Left cardiac atrium (tissue), 4 donors: ENCODE measurements at regions of chr20 and their contacts with region 1.

Region 1: GRCh38 chr20:17179840-17180239 is 47.0 kb upstream of the PCSK2 start:
- DNase-seq: no peak
- ATAC-seq: no peak

Region 2: DNA sequence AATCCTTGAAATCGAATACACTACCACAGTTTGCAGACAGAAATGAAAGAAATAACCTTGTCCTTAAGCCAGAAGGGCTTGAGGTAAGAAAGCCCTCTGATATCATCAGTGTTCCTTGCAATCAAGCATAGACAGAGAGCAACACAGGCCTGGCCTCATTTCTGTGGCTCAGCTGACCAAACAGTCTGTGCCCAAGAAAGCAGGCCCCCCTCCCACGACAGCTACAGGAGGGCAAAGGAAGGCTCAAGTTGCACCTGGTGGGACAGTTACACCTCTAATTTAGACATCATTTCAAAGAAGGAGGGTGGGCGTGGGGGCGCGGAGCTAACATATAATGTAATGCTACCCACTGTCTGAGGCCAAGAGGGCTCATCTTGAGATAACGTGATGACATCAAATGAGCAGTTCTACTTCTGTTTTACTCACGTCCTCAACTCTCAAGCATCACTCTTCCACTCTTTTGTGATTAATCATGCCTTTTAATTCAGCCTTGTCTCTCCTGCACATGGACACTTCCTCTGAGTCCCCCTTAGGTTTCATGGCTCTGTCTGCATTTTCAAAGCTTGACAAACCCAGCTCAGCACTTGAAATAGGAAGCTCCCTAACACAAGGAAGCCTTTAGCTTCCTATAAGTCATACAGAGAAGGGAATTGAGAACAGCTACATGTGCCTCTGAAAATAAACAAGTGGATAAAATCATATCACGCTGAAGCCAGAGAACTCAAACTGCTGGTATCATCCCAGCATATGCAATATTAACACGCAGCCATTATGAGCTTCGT is 628.0 kb before region 1 on chr20:
- intact Hi-C with region 1: no loop called
- DNase-seq: no peak
- ATAC-seq: no peak

Region 3: DNA sequence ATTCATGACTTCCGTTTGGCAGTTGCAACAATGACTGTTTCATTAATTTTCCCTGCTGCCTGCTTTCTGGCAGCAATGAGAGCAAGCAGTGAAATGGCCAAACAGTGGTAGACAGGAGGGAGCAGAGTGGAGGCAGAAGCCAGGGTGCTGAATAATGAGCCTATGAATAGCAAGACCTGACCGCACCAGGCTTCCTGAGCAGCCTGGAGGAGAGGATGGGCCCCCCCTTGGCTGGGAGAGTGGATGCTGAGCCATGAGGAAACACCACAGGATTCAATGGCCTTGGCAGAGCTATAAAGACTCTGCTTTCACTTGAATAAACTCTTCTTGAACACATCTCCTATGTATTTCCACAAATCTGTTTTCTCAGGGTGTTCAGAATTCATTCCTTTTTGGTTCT is 518.1 kb before region 1 on chr20:
- intact Hi-C with region 1: no loop called
- DNase-seq: no peak
- ATAC-seq: no peak

Region 4: DNA sequence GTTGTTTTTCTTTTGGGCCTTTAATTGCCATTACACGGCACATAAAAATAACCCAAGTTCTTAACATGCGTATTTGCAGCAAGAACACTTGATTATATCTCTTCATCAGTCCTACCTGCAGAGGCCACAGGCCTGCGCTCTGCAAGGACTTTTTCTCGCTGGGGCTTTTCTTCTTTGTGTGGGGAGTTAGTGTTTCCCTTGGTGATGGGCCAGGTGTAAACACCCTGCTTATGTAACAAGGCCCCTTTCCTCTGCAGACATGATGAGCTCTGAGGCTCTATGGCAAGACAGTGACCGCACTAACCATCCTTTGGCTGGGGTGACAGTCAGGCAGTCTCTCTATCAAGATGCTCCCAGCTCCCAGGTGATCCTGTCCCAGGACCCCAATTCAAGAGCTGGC is 50.8 kb before region 1 on chr20:
- intact Hi-C with region 1: loop called in 1 of 2 experiments (anchors 10 kb)
- DNase-seq: no peak
- ATAC-seq: no peak